ENCODE measurements at regions of chr12 and their contacts with region 1.

Region 1: DNA sequence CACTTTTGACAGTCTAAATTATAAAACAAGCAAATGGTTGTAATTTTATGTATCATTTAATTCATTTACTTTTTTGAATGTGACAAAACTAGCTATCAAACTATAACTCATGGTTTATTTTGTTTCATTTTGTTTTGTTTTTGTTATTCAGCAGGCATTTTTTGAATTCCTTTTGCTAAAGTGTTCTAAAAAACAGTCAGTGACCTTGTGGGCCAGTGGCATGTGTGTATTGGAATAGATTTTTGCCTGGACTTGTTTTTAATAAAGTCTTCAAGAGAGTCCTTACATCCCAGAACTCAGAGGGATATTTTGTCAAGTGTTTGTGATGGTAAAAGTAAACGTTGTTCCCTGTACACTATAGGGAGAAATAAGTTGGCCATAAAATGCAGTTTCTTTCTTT is 369.7 kb upstream of the SYT1 start:
- DNase-seq: no peak
- H3K4me3 ChIP-seq: no peak overlapping the region
- H3K27ac ChIP-seq: no peak overlapping the region
- H3K4me1 ChIP-seq: no peaks in the 10 kb centered on the region
- H3K27me3 ChIP-seq: no peaks in the 10 kb centered on the region
- CTCF ChIP-seq: no peak

Region 2: GRCh38 chr12:77429426-77429825 is 1065.5 kb before region 1 on chr12:
- CTCF ChIA-PET with region 1: no interaction called
- POLR2A ChIA-PET with region 1: no interaction called
- intact Hi-C with region 1: no loop called
- DNase-seq: no peak
- H3K4me3 ChIP-seq: no peak overlapping the region
- H3K27ac ChIP-seq: no peak overlapping the region
- H3K4me1 ChIP-seq: no peaks in the 10 kb centered on the region
- H3K27me3 ChIP-seq: no peaks in the 10 kb centered on the region
- CTCF ChIP-seq: no peak

Region 3: DNA sequence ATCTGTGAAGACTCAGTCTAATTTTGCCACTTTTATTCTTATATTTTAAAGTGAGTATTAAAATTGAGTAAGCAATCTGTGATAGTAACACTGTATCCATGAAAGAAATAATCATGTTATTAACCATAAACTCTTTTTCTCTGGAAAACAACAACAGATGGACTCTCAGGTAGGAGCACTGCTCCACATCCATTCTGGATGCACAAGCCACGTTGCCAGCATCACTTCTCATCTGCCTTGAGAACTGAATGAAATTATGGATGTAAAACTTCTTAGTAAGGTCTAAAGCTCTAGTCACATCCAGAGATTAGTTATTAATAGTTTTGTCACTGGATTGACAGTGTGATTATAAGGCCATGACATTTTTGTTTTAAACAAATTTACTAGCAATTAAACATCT is 119.5 kb before region 1 on chr12:
- CTCF ChIA-PET with region 1: no interaction called
- POLR2A ChIA-PET with region 1: no interaction called
- intact Hi-C with region 1: no loop called
- DNase-seq: no peak
- H3K4me3 ChIP-seq: no peak overlapping the region
- H3K27ac ChIP-seq: no peak overlapping the region
- H3K4me1 ChIP-seq: no peaks in the 10 kb centered on the region
- H3K27me3 ChIP-seq: no peaks in the 10 kb centered on the region
- CTCF ChIP-seq: no peak

Region 4: GRCh38 chr12:78671295-78671694 is 176.4 kb after region 1 on chr12:
- CTCF ChIA-PET with region 1: no interaction called
- POLR2A ChIA-PET with region 1: interaction called, 11 read pairs
- intact Hi-C with region 1: no loop called
- DNase-seq: no peak
- H3K4me3 ChIP-seq: no peak overlapping the region
- H3K27ac ChIP-seq: no peak overlapping the region
- H3K4me1 ChIP-seq: no peaks in the 10 kb centered on the region
- H3K27me3 ChIP-seq: no peaks in the 10 kb centered on the region
- CTCF ChIP-seq: no peak